ENCODE measurements at regions of chr3 and their contacts with region 1.

Region 1: DNA sequence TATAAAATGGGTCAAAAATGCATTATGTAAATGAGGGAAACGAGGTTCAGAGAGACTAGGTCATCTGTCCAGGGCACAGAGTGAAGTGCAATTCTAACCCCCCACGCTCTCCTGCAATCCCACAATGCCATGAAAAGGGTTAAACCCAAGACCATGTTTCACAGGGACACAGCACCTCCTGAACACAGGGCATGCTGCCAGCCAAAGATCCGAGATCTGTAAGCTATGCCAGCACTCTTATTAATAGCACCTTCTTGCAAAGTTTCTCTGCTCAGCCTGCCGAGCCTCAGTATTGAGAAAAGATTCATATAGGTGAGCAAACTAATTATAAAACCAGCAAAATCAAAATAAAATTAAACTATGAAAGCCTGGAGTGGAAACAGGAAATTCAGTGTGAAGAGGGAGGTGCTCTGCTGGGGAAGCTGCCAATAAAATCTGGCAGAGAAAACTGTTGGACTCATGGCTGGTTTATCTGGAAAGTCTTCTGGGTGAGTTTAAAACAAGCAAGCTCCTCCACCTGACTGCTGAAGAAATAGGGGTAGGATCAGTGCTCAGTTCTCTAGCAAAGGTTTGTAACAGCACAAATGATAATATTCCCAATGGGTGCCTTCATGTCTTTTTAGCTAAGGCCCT is 50.3 kb downstream of the LRIG1 start:
- DNase-seq: peak in 3 of 10 donors; percentile 50 to 68 (median 53)
- H3K4me3 ChIP-seq: peak overlapping the region in 20 of 59 donors; percentile 1 to 42 (median 20)
- H3K27ac ChIP-seq: peak overlapping the region in 52 of 59 donors; percentile 16 to 91 (median 80)
- H3K27me3 ChIP-seq: no peaks in the 10 kb centered on the region
- CTCF ChIP-seq: no peak

Region 2: DNA sequence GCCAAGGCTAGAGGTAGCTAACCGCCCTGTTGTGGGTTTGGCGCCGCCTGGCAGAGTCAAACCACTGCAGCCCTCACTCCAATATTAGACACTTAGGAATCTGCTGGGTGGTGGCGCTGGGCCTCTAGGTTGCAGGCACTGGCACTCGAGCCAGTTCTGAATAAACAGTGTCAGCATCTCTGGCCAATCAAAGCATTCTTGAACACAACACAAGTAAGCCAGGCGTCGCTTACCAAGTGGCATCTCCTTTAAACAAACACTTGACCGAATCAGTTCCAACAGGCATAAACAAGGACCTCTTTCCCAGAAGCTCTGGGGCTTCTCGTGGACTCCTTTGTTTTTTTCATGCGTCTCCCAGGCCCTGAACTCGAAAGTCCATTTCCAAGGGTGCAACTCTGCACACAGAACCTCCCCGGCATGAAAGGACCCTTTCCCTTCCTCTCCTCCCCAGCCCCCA is 32.0 kb before region 1 on chr3:
- intact Hi-C with region 1: loop called in 1 of 2 experiments (anchors 5 kb)
- DNase-seq: peak in 8 of 10 donors; percentile 68 to 87 (median 77)
- H3K4me3 ChIP-seq: peak overlapping the region in 11 of 59 donors; percentile 4 to 35 (median 12)
- H3K27ac ChIP-seq: peak overlapping the region in 55 of 59 donors; percentile 6 to 90 (median 72)
- H3K27me3 ChIP-seq: no peaks in the 10 kb centered on the region
- CTCF ChIP-seq: peak in 52 of 56 donors; percentile 24 to 74 (median 46)

Region 3: GRCh38 chr3:66483406-66483906 is 33.0 kb after region 1 on chr3:
- intact Hi-C with region 1: loop called (anchors 2 kb)
- DNase-seq: peak in 9 of 10 donors; percentile 34 to 63 (median 46)
- H3K4me3 ChIP-seq: peak overlapping the region in 47 of 59 donors; percentile 0 to 58 (median 28)
- H3K27ac ChIP-seq: peak overlapping the region; percentile 63 to 98 (median 93)
- H3K27me3 ChIP-seq: no peaks in the 10 kb centered on the region
- CTCF ChIP-seq: peak in 6 of 56 donors; percentile 0 to 14 (median 6)

Measured in dorsolateral prefrontal cortex (tissue), 120 donors.